ENCODE measurements at regions of chr1 and their contacts with region 1.

Region 1: DNA sequence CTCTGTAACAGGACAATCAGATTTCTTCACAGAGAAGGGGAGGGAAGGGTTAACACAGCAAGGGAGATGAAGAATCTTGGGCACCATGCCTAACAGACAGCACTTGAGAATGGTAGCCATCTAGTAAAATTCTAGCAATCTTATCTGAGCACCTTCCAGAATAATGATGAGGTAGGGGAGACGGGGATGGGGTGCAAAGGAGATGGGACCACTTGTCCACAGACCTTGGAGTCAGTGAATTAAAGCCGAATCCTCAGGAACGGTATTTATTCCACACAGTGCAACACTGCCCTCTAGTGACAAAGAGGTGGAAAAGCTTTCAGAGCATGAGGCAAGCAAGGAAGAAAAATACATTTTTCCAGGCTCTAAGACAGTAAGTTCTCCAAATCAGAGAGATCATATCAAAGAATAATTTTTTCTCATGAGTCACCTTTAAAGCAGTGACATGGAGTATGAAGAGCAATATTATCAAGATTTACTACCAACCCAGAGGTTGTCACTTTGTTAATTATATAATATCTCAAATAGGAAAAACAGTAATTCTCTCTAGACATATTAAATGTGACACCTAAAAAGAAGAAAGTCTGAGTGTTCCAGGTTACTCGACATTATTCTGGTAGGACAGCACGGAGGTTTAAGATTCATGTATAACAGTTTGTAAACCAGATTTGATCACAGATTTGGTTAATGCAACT is 43.3 kb upstream of the LPAR3 start:
- DNase-seq: peak; percentile 24
- H3K4me3 Mint-ChIP-seq: no peak overlapping the region
- H3K27ac Mint-ChIP-seq: no peak overlapping the region
- H3K4me1 Mint-ChIP-seq: no peaks in the 10 kb centered on the region
- H3K27me3 Mint-ChIP-seq: no peaks in the 10 kb centered on the region

Region 2: DNA sequence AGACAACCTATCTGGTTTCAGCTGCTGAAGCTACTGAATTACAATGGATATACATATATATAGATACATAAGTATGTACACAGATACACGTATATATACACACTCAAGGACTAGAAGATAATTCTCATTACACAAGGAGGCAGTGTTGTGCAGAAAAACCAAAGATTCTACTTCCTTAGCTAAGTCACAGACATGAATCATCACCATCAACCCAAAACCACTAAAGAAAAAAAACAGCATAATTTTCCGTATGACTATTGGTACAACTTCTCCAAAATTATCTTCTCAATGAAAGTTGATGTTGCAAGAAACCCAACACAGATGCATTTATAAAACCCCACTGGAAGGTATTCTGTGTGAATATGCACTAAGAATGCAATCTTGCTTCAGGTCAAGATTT is 494.0 kb before region 1 on chr1:
- CTCF ChIA-PET with region 1: interaction called, 14 read pairs
- POLR2A ChIA-PET with region 1: no interaction called
- DNase-seq: no peak
- H3K4me3 Mint-ChIP-seq: peak overlapping the region; percentile 38
- H3K27ac Mint-ChIP-seq: peak overlapping the region; percentile 83
- H3K4me1 Mint-ChIP-seq: peaks cover 22% of the 10 kb centered on the region
- H3K27me3 Mint-ChIP-seq: peaks cover 10% of the 10 kb centered on the region

Region 3: GRCh38 chr1:84753516-84754385 is 182.5 kb before region 1 on chr1:
- CTCF ChIA-PET with region 1: interaction called, 23 read pairs
- POLR2A ChIA-PET with region 1: no interaction called
- DNase-seq: peak; percentile 83
- H3K4me3 Mint-ChIP-seq: no peak overlapping the region
- H3K27ac Mint-ChIP-seq: no peak overlapping the region
- H3K4me1 Mint-ChIP-seq: peaks cover 16% of the 10 kb centered on the region
- H3K27me3 Mint-ChIP-seq: peaks cover 19% of the 10 kb centered on the region

Region 4: GRCh38 chr1:84758968-84759491 is 177.2 kb before region 1 on chr1:
- CTCF ChIA-PET with region 1: interaction called, 23 read pairs
- POLR2A ChIA-PET with region 1: no interaction called
- DNase-seq: no peak
- H3K4me3 Mint-ChIP-seq: no peak overlapping the region
- H3K27ac Mint-ChIP-seq: no peak overlapping the region
- H3K4me1 Mint-ChIP-seq: peaks cover 7% of the 10 kb centered on the region
- H3K27me3 Mint-ChIP-seq: peaks cover 16% of the 10 kb centered on the region

Region 5: DNA sequence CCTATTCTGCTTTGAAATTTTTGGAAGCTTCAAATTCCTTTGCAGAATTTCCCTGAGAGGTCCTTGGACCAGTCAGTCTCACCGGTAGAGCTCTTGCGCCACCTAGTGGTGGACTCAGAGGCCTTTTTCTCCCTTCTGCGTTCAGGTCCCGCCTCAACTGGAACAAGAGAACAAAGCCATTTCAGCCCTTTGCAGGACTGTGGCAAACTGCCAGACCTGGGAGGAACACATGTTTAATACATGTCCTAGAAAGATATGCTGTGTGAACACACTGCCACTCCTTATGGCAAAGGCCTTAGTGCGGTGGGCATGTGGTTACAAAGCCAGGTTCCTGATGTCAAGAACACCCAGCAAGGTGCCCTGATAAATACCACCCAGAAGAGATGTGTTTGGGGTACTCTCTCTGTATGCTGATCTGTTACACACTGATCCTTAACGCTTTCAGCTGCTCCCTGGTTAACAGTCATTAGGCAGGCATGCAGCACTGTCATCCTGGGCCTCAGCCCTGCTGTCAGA is 163.8 kb before region 1 on chr1:
- CTCF ChIA-PET with region 1: interaction called, 17 read pairs
- POLR2A ChIA-PET with region 1: no interaction called
- DNase-seq: peak; percentile 75
- H3K4me3 Mint-ChIP-seq: no peak overlapping the region
- H3K27ac Mint-ChIP-seq: no peak overlapping the region
- H3K4me1 Mint-ChIP-seq: no peaks in the 10 kb centered on the region
- H3K27me3 Mint-ChIP-seq: peaks cover 22% of the 10 kb centered on the region

Region 6: DNA sequence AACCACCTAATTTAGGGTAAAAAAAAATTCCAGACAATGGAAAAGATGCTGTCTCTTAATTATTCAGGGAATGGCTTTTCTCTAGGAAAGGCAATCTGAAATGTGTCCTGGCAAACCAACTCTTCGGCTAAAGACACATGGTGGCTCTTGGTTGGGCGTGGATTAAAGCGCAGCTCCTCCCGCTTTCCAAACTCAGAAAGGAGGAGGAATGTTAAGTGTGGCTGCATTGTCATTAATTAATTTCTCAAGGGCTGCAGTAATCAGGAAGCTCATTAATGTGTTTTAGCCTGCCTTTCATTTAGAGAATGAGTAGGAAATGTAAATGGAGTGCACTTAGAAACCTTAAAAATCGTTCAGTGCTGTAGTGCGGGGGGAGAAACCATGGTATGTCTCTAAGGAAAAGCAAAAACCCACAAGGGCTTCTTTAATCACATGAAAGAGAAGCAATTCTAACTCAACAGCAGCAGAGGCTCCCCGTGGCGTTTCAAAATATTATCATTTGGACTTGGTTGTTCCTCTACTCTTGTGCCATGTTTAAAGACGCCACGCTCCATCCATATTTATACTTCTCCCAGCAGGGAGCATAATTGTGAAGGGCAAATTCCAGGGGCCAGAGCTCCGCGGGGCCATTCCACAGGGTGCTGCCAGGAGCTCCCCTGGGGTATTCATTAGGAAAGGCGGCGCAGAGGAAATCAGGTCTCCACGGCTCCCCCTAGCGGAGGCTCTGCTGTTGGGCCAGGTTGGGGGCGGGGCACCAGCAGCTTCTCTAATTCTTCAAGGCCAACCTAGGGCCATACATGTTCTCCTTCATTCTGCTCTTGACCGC is 154.1 kb before region 1 on chr1:
- CTCF ChIA-PET with region 1: interaction called, 40 read pairs
- POLR2A ChIA-PET with region 1: interaction called, 4 read pairs
- DNase-seq: peak; percentile 80
- H3K4me3 Mint-ChIP-seq: peak overlapping the region; percentile 59
- H3K27ac Mint-ChIP-seq: no peak overlapping the region
- H3K4me1 Mint-ChIP-seq: peaks cover 16% of the 10 kb centered on the region
- H3K27me3 Mint-ChIP-seq: peaks cover 2% of the 10 kb centered on the region

Region 7: DNA sequence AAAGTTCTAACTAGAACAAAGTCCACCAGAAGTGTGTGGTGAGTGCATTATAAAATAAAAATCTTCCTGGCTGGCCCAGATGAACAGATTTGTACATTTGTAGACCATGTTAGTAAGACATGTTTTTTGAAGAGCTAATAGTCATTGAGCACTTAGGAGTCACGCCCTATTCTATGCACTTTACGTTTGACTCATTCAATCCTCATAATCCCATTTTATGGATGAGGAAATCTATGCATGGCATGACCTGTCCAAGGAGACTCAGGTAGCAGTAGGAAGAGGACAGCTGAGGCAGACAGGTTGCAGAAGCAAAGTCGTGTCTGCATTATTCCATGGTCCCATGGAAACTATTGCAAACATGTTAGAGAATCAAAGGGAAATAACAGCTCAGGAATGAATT is 12.9 kb before region 1 on chr1:
- CTCF ChIA-PET with region 1: interaction called, 12 read pairs
- POLR2A ChIA-PET with region 1: interaction called, 3 read pairs
- DNase-seq: no peak
- H3K4me3 Mint-ChIP-seq: no peak overlapping the region
- H3K27ac Mint-ChIP-seq: no peak overlapping the region
- H3K4me1 Mint-ChIP-seq: no peaks in the 10 kb centered on the region
- H3K27me3 Mint-ChIP-seq: peaks cover 2% of the 10 kb centered on the region